ENCODE measurements at regions of chr21 and their contacts with region 1.

Region 1: DNA sequence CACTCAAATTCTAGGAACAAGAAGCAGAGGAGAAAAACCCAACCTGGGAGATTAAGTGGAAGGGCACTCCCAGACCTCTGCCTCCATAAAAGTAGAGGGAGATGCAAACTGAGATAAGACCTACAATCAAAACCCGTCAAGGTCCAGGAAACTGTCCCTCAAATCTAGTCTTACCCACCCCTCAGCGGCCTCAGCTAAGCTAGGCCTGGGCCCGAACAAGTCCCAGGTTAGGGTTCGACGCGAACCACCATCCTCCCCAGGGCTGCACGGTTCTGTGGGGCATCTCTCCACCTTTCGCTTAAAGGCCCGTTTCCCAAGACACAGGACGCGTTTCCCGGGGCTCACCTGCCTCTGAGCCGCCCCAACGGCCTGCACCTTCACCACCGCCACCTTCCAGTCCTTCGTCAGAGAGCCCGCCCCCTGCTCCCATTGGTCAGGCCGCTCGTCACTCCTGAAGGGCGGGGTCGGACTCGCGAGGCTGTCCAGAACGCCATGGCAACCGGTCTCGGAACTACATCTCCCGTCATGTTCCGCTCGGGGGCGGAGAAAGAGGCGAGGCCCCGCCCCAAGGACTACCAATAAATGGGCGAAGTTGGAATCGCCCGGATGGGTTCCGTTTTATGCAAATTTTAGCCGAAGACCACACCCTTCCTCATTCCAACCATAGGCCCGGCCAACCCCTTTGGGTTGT is at the start of gene CRYZL1:
- DNase-seq: peak; percentile 100
- H3K4me3 Mint-ChIP-seq: peak within 1 kb of the TSS; percentile 94
- H3K27ac Mint-ChIP-seq: peak within 1 kb of the TSS; percentile 95
- H3K4me1 Mint-ChIP-seq: peaks cover 13% of the 10 kb centered on the region
- H3K27me3 Mint-ChIP-seq: peaks cover 22% of the 10 kb centered on the region
- total RNA-seq, gene CRYZL1: 30.4 and 36.5 TPM in 2 replicates

Region 2: DNA sequence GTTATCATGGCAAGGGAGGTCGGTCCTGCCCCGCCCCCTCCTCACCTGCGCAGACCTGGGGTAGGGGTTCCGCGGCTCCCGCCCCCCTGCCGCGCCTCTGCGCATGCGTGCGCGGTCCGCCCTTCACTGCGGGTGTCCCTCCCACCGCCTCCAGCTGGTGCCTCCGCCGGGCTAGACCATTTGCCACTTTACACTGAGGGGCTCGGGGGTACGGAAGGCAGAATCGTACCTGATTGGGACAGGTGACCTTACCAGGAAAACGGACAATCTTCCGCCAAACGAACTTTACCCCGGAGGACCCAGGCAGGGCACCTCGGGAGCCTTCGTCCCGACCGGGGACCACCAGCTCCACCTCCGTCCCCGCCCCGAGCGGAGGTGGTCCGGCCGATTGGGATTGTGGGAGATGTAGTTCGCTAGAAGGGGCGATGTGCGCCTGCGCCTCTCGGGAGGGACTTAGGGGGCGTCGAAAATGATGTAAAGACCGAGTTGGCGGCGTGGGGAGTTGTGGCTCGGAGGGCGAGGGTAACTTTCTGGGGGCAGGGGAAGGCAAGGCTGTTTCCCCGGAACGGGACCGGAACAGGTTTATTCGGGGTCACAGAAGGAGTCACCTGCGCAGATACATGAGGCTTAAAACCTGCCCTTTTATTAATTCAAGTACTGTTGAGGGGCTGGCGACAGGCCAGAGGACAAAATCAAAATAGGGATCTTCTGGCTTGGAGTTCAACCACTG is 149.9 kb before region 1 on chr21 and contains the start of gene DNAJC28:
- intact Hi-C with region 1: loop called (anchors 5 kb)
- DNase-seq: peak; percentile 90
- H3K4me3 Mint-ChIP-seq: peak within 1 kb of the TSS; percentile 98
- H3K27ac Mint-ChIP-seq: peak within 1 kb of the TSS; percentile 94
- H3K4me1 Mint-ChIP-seq: peaks cover 9% of the 10 kb centered on the region
- H3K27me3 Mint-ChIP-seq: peaks cover 12% of the 10 kb centered on the region
- total RNA-seq, gene DNAJC28: 0.16 and 0.37 TPM in 2 replicates

Region 3: DNA sequence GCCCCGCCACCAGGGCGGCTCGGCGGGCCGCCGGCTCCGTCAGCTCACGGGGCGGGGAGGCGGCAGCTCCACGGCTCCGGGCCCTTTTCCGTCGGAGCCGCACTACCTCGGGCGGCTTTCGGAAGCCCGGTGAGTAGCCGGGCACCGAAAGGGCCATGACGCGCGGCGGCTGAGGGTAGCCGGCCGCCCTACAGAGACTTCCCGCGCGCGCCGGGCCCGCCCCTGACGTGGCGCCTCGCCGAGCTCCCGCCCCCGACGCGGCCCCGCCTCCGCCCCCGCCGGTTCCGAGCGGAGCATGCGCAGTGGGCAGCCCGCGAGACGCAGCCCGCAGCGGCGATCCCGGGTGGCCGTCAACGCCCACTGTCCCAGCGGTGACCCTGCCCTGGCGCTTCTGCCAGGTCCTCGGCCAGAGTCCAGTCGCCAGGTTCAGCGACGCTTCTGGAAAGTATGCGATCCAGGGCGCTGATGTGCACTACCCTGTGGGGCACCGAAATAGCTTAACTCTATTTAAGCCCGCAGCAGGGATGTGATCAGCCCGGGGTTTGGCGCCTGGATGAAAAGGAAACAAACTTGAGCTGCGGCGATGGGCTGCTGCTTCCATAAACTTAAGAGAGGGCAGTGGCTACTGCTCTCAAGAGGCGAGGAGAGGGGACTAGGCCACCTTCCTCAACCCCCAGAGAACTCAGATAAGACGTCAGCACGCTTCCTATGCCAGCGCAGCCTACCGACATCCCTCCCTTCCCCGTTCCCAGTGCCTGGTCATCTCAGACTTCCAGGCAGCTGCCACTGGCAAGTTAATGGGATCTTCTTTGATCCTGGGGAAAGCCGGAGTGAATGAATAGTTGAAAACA is 52.8 kb before region 1 on chr21 and contains the start of gene DONSON:
- intact Hi-C with region 1: loop called (anchors 1 kb)
- DNase-seq: peak; percentile 88
- H3K4me3 Mint-ChIP-seq: peak within 1 kb of the TSS; percentile 93
- H3K27ac Mint-ChIP-seq: peak within 1 kb of the TSS; percentile 80
- H3K4me1 Mint-ChIP-seq: peaks cover 23% of the 10 kb centered on the region
- H3K27me3 Mint-ChIP-seq: no peaks in the 10 kb centered on the region
- total RNA-seq, gene DONSON: 40.3 and 41.7 TPM in 2 replicates

Region 4: GRCh38 chr21:33608559-33608958 is 32.9 kb before region 1 on chr21:
- intact Hi-C with region 1: no loop called
- DNase-seq: no peak
- H3K4me3 Mint-ChIP-seq: no peak overlapping the region
- H3K27ac Mint-ChIP-seq: no peak overlapping the region
- H3K4me1 Mint-ChIP-seq: no peaks in the 10 kb centered on the region
- H3K27me3 Mint-ChIP-seq: no peaks in the 10 kb centered on the region

Region 5: GRCh38 chr21:34073032-34073869 is 431.8 kb after region 1 on chr21 and contains the starts of genes MRPS6 and SLC5A3:
- intact Hi-C with region 1: loop called (anchors 10 kb)
- DNase-seq: peak; percentile 68
- H3K4me3 Mint-ChIP-seq: peak within 1 kb of the TSS; percentile 95
- H3K27ac Mint-ChIP-seq: peak within 1 kb of the TSS; percentile 88
- H3K4me1 Mint-ChIP-seq: peaks cover 43% of the 10 kb centered on the region
- H3K27me3 Mint-ChIP-seq: no peaks in the 10 kb centered on the region
- total RNA-seq, gene MRPS6: 117 and 120 TPM in 2 replicates
- total RNA-seq, gene SLC5A3: 41.0 and 41.2 TPM in 2 replicates

Measured in activated T-helper 2 cell treated with anti-CD3 and anti-CD28 coated beads, Interferon-gamma antibody, Interleukin-2, Interleukin-4, amounts not matched to agents 10 μg/mL and 5 μg/mL and 100 μg/mL, durations not matched to agents 14 hours and 24 hours and 36 hours (primary cell).